Caco-2 (cell line): ENCODE measurements at regions of chr1 and their contacts with region 1.

Region 1: GRCh38 chr1:70017770-70018169 is 187.6 kb downstream of the LRRC40 start:
- DNase-seq: no peak
- H3K4me3 ChIP-seq: no peak overlapping the region
- H3K4me3 Mint-ChIP-seq: no peak overlapping the region
- H3K27ac Mint-ChIP-seq: no peak overlapping the region
- H3K4me1 ChIP-seq: no peaks in the 10 kb centered on the region
- H3K4me1 Mint-ChIP-seq: no peaks in the 10 kb centered on the region
- H3K27me3 ChIP-seq: no peaks in the 10 kb centered on the region
- H3K27me3 Mint-ChIP-seq: no peaks in the 10 kb centered on the region
- CTCF ChIP-seq: no peak

Region 2: DNA sequence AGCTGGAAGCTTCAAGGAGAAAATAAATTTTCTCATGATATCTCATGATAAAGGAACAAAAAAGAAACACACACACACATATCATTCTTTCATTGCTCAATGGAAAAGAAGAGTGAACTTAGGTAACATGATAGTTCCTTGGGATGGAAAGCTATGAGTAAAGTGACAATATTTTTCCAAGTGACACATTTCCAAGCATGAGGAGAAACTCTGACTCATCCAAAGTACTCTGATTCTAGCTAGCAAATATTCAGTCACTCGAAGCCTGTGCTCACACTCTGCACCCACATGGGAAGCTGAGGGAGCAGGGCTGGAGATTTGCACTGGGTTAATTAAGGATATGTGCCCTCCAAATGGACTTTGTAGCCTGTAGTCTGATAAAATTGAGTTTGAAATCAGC is 34.8 kb before region 1 on chr1:
- CTCF ChIA-PET with region 1: no interaction called
- POLR2A ChIA-PET with region 1: no interaction called
- intact Hi-C with region 1: loop called (anchors 2 kb)
- DNase-seq: no peak
- H3K4me3 ChIP-seq: no peak overlapping the region
- H3K4me3 Mint-ChIP-seq: no peak overlapping the region
- H3K27ac Mint-ChIP-seq: no peak overlapping the region
- H3K4me1 ChIP-seq: no peaks in the 10 kb centered on the region
- H3K4me1 Mint-ChIP-seq: no peaks in the 10 kb centered on the region
- H3K27me3 ChIP-seq: no peaks in the 10 kb centered on the region
- H3K27me3 Mint-ChIP-seq: no peaks in the 10 kb centered on the region
- CTCF ChIP-seq: no peak